ENCODE measurements at regions of chr12 and their contacts with region 1.

Region 1: DNA sequence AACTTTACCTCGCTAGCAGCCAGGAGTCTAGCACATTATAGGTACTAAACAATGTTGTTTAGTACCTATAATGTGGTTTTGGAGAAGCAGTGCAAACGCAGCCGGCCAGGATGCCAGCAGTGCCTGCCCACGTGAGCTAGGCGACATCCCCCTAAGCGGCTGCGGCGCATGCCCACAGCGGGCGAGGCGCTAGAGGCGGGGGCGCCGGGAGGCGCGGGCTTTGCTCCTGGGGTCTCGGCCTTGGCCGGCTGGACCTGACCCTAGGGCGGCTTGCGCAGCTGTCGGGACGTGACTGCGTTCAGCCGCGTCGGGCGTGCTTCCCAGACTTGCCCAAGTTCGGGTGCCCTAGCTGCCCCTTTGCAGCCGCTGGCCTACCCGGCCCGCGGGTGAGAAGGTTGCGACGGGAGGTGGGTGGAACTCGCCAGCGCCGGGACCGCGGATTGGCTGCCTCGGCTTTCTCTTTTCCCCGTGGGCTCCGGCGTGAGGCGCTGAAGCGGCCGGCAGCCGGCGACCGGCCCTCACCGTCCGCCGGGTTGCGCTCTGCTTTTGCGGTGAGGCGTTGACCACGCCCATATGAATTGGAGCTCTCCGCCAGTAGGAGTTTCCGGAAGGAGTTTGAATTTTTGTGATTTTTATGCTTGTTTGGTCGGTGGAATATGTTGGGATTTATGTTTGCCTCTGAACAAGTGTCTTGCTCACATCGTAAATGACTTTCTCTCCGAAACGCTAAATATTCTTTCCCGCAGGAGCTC is at the start of gene TMEM19:
- DNase-seq: peak; percentile 90 to 95 (median 92)
- ATAC-seq: peak; percentile 94
- H3K4me3 ChIP-seq: peak within 1 kb of the TSS; percentile 65
- H3K27ac ChIP-seq: peak within 1 kb of the TSS; percentile 85
- H3K4me1 ChIP-seq: peaks cover 7 to 10% of the 10 kb centered on the region in 2 experiments; a peak in 2 of 5 replicates
- H3K27me3 ChIP-seq: no peaks in the 10 kb centered on the region
- CTCF ChIP-seq: peak; percentile 53 to 91 (median 71)
- EP300 ChIP-seq: peak; percentile 5; the same call in 1 of the 2 replicates
- POLR2A ChIP-seq: peak; percentile 93
- RAD21 ChIP-seq: peak; percentile 38 to 52; a peak in 3 of 4 replicates
- polyA plus RNA-seq, gene TMEM19: 17.8 to 18.4 TPM

Region 2: DNA sequence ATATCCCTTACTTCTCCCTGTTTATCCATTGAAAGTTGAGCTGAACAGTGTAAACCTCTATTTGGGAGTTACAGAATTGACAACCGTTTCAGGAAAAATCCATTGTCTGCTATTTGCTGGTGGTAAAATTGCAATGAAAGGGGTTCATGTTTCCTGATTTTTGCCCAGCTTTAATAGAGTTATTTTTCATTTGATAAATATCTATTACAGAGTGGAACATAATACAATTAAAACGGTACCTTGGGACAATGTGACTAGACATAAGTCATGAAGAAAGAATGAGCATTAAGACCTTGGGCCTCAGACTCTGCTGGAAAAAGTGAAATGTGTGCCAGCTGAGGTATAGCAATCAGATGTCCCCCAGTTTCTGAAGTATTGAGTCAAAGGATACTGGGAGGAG is 778.7 kb before region 1 on chr12:
- CTCF ChIA-PET with region 1: no interaction called
- POLR2A ChIA-PET with region 1: no interaction called
- in situ Hi-C with region 1: no loop called
- intact Hi-C with region 1: no loop called
- DNase-seq: no peak
- ATAC-seq: no peak
- H3K4me3 ChIP-seq: no peak overlapping the region
- H3K27ac ChIP-seq: no peak overlapping the region
- H3K4me1 ChIP-seq: no peaks in the 10 kb centered on the region
- H3K27me3 ChIP-seq: no peaks in the 10 kb centered on the region
- CTCF ChIP-seq: no peak
- EP300 ChIP-seq: no peak
- POLR2A ChIP-seq: no peak
- RAD21 ChIP-seq: no peak

Region 3: DNA sequence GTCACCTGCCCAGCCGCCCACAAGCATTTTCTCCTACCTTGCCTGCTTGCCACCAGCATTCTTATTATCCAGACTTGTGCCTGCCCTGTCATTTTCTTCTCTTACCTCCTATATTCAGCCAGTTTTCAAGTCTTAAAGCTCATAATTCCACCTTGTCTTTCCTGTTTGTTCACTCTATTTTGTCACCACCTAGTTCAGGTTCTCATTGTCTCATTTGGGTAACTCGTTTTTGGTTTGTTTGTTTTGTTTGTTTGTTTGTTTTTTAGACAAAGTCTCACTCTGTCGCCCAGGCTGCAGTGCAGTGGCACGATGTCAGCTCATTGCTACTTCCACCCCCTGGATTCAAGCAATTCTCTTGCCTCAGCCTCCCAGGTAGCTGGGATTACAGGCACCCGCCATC is 174.3 kb before region 1 on chr12:
- CTCF ChIA-PET with region 1: no interaction called
- POLR2A ChIA-PET with region 1: no interaction called
- in situ Hi-C with region 1: no loop called
- intact Hi-C with region 1: no loop called
- DNase-seq: no peak
- ATAC-seq: no peak
- H3K4me3 ChIP-seq: no peak overlapping the region
- H3K27ac ChIP-seq: no peak overlapping the region
- H3K4me1 ChIP-seq: no peaks in the 10 kb centered on the region
- H3K27me3 ChIP-seq: peaks cover 0 to 14% of the 10 kb centered on the region in 2 experiments; a peak in 3 of 5 replicates
- CTCF ChIP-seq: no peak
- EP300 ChIP-seq: no peak
- POLR2A ChIP-seq: no peak
- RAD21 ChIP-seq: no peak

Region 4: GRCh38 chr12:71663561-71664294 is 22.4 kb before region 1 on chr12 and contains the start of gene ZFC3H1:
- CTCF ChIA-PET with region 1: no interaction called
- POLR2A ChIA-PET with region 1: interaction called, 17 read pairs
- in situ Hi-C with region 1: no loop called
- intact Hi-C with region 1: no loop called
- DNase-seq: peak; percentile 80 to 99 (median 86)
- ATAC-seq: peak; percentile 88
- H3K4me3 ChIP-seq: peak within 1 kb of the TSS; percentile 85
- H3K27ac ChIP-seq: peak within 1 kb of the TSS; percentile 97
- H3K4me1 ChIP-seq: peaks cover 11 to 12% of the 10 kb centered on the region in 2 experiments; a peak in 3 of 5 replicates
- H3K27me3 ChIP-seq: no peaks in the 10 kb centered on the region
- CTCF ChIP-seq: peak in 2 of 3 experiments; percentile 50 to 53; a peak in 4 of 6 replicates
- EP300 ChIP-seq: peak; percentile 33; the same call in 1 of the 2 replicates
- POLR2A ChIP-seq: peak; percentile 91
- RAD21 ChIP-seq: no peak
- polyA plus RNA-seq, gene ZFC3H1: 14.8 to 16.7 TPM

Region 5: GRCh38 chr12:71671816-71672215 is 14.3 kb before region 1 on chr12:
- CTCF ChIA-PET with region 1: no interaction called
- POLR2A ChIA-PET with region 1: interaction called, 19 read pairs
- in situ Hi-C with region 1: no loop called
- intact Hi-C with region 1: no loop called
- DNase-seq: peak in 2 of 4 experiments; percentile 47 to 66
- ATAC-seq: peak; percentile 61
- H3K4me3 ChIP-seq: no peak overlapping the region
- H3K27ac ChIP-seq: peak overlapping the region; percentile 65
- H3K4me1 ChIP-seq: peaks cover 0 to 27% of the 10 kb centered on the region in 2 experiments; a peak in 2 of 5 replicates
- H3K27me3 ChIP-seq: no peaks in the 10 kb centered on the region
- CTCF ChIP-seq: no peak
- EP300 ChIP-seq: peak; percentile 77
- POLR2A ChIP-seq: no peak
- RAD21 ChIP-seq: no peak

Region 6: DNA sequence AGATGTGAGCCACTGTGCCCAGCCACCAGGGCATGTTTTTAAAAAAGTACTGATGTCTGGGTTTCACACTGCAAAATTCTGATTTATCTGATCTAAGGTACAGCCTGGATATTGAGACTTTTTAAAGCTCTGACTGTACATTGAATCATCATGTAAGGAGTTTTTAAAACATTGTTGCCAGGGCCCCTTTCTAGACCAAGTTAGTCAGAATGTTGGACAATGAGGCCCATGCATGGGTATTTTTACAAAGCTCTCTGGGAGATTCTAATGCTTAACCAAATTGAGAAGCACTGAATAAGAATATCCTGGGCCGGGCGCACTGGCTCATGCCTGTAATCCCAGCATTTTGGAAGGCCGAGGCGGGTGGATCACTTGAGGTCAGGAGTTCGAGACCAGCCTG is 16.5 kb after region 1 on chr12:
- CTCF ChIA-PET with region 1: no interaction called
- POLR2A ChIA-PET with region 1: interaction called, 12 read pairs
- in situ Hi-C with region 1: no loop called
- intact Hi-C with region 1: no loop called
- DNase-seq: no peak
- ATAC-seq: no peak
- H3K4me3 ChIP-seq: no peak overlapping the region
- H3K27ac ChIP-seq: no peak overlapping the region
- H3K4me1 ChIP-seq: no peaks in the 10 kb centered on the region; a peak in 2 of 5 replicates
- H3K27me3 ChIP-seq: no peaks in the 10 kb centered on the region
- CTCF ChIP-seq: no peak
- EP300 ChIP-seq: no peak
- POLR2A ChIP-seq: no peak
- RAD21 ChIP-seq: no peak

Region 7: GRCh38 chr12:71746983-71747611 is 61.0 kb after region 1 on chr12:
- CTCF ChIA-PET with region 1: interaction called, 5 read pairs
- POLR2A ChIA-PET with region 1: no interaction called
- in situ Hi-C with region 1: no loop called
- intact Hi-C with region 1: loop called (anchors 1 kb)
- DNase-seq: peak in 3 of 4 experiments; percentile 28 to 73 (median 45)
- ATAC-seq: peak; percentile 84
- H3K4me3 ChIP-seq: no peak overlapping the region
- H3K27ac ChIP-seq: no peak overlapping the region
- H3K4me1 ChIP-seq: peaks cover 3 to 10% of the 10 kb centered on the region in 2 experiments; a peak in 2 of 5 replicates
- H3K27me3 ChIP-seq: no peaks in the 10 kb centered on the region
- CTCF ChIP-seq: peak; percentile 69 to 89 (median 77)
- EP300 ChIP-seq: no peak
- POLR2A ChIP-seq: no peak
- RAD21 ChIP-seq: peak; percentile 88 to 91

Measured in K562 (cell line).